A549 (cell line): ENCODE measurements at regions of chr1 and their contacts with region 1.

Region 1: GRCh38 chr1:119367427-119368124 is 1.0 kb upstream of the HAO2 start:
- DNase-seq: peak; percentile 30 to 32
- ATAC-seq: peak; percentile 71 to 78; a peak in 4 of 6 replicates
- H3K4me3 ChIP-seq: no peak overlapping the region
- H3K27ac ChIP-seq: no peak overlapping the region
- H3K4me1 ChIP-seq: peaks cover under 1% of the 10 kb centered on the region; the same call in 2 of the 3 replicates
- CTCF ChIP-seq: peak; percentile 74
- EP300 ChIP-seq: no peak
- POLR2A ChIP-seq: no peak
- RAD21 ChIP-seq: peak; percentile 77 to 85

Region 2: DNA sequence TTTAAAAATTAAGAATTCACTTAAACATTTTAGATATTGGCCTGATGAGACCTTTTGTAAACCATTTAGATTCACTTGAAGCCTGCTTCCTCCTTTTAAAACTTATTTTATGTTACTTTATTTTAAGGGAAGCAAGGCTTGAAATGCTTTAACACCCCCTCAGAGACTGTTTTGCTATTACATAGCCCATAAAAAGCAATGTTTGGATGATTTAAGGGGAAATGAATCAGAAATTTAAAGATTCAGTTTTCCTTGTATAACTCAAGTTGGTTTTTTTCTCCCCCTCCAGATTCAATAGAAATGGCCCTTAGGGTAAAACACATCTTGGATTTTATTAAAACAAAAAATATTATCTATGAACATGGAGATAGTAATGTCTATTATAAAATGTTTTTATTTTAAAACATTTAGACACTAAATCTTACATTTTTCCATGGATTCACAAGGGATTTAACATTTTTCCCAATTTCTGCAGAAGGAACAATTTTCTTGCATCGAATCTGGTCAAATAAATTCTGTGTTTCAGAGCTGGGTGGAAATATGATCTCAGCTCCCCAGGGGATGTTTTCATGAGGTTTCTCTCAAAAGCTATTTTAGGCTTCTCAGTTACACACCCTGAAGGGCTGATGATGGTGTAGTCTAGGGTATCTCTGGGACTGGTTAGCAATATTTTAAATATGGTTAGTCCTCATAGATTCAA is 157.8 kb before region 1 on chr1:
- CTCF ChIA-PET with region 1: no interaction called
- POLR2A ChIA-PET with region 1: no interaction called
- DNase-seq: no peak
- ATAC-seq: no peak
- H3K4me3 ChIP-seq: no peak overlapping the region
- H3K27ac ChIP-seq: no peak overlapping the region
- H3K4me1 ChIP-seq: no peaks in the 10 kb centered on the region
- CTCF ChIP-seq: no peak
- EP300 ChIP-seq: no peak
- POLR2A ChIP-seq: no peak
- RAD21 ChIP-seq: no peak

Region 3: GRCh38 chr1:119347858-119348257 is 19.7 kb before region 1 on chr1:
- CTCF ChIA-PET with region 1: interaction called, 17 read pairs
- POLR2A ChIA-PET with region 1: no interaction called
- DNase-seq: no peak
- ATAC-seq: no peak
- H3K4me3 ChIP-seq: no peak overlapping the region
- H3K27ac ChIP-seq: no peak overlapping the region
- H3K4me1 ChIP-seq: no peaks in the 10 kb centered on the region
- CTCF ChIP-seq: no peak
- EP300 ChIP-seq: no peak
- POLR2A ChIP-seq: no peak
- RAD21 ChIP-seq: no peak

Region 4: GRCh38 chr1:119428991-119429390 is 61.4 kb after region 1 on chr1:
- CTCF ChIA-PET with region 1: no interaction called
- POLR2A ChIA-PET with region 1: no interaction called
- DNase-seq: no peak
- ATAC-seq: no peak
- H3K4me3 ChIP-seq: no peak overlapping the region
- H3K27ac ChIP-seq: no peak overlapping the region
- H3K4me1 ChIP-seq: no peaks in the 10 kb centered on the region
- CTCF ChIP-seq: no peak
- EP300 ChIP-seq: no peak
- POLR2A ChIP-seq: no peak
- RAD21 ChIP-seq: no peak

Region 5: DNA sequence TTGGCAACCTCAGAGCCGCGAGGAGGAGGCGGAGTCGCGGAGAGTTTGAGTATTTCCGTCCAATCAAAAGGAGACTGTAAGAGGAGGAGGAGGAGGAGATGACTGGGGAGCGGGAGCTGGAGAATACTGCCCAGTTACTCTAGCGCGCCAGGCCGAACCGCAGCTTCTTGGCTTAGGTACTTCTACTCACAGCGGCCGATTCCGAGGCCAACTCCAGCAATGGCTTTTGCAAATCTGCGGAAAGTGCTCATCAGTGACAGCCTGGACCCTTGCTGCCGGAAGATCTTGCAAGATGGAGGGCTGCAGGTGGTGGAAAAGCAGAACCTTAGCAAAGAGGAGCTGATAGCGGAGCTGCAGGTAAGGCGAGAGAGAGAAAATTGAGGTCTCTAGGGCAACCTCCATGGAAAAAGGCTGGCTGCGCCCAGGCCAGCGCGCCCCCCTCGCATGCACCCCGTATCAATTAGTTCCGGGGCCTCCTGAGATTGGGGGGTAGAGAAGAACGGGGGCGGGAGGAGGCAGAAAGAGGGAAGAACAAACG is 344.3 kb after region 1 on chr1 and contains the start of gene PHGDH:
- CTCF ChIA-PET with region 1: no interaction called
- POLR2A ChIA-PET with region 1: no interaction called
- DNase-seq: peak; percentile 76 to 82
- ATAC-seq: peak; percentile 93 to 94
- H3K4me3 ChIP-seq: peak within 1 kb of the TSS; percentile 95
- H3K27ac ChIP-seq: peak within 1 kb of the TSS; percentile 95 to 99
- H3K4me1 ChIP-seq: peaks cover 23% of the 10 kb centered on the region
- CTCF ChIP-seq: no peak
- EP300 ChIP-seq: no peak
- POLR2A ChIP-seq: no peak
- RAD21 ChIP-seq: no peak
- polyA plus RNA-seq, gene PHGDH: 41.4 and 67.1 TPM in 2 replicates